AG04450 (cell line): ENCODE measurements at regions of chr3 and their contacts with region 1.

Region 1: GRCh38 chr3:195271116-195271858 is at the start of gene XXYLT1:
- DNase-seq: no peak
- H3K4me3 ChIP-seq: peak within 1 kb of the TSS; percentile 81
- H3K27ac ChIP-seq: peak within 1 kb of the TSS; percentile 39
- H3K27me3 ChIP-seq: no peaks in the 10 kb centered on the region
- CTCF ChIP-seq: peak; percentile 86
- polyA plus RNA-seq, gene XXYLT1: 16.5 and 17.3 TPM in 2 replicates

Region 2: GRCh38 chr3:195286115-195286872 is 15.0 kb after region 1 on chr3:
- CTCF ChIA-PET with region 1: interaction called, 48 read pairs
- POLR2A ChIA-PET with region 1: interaction called, 4 read pairs
- DNase-seq: peak; percentile 62
- H3K4me3 ChIP-seq: no peak overlapping the region
- H3K27ac ChIP-seq: no peak overlapping the region
- H3K27me3 ChIP-seq: no peaks in the 10 kb centered on the region
- CTCF ChIP-seq: no peak

Region 3: DNA sequence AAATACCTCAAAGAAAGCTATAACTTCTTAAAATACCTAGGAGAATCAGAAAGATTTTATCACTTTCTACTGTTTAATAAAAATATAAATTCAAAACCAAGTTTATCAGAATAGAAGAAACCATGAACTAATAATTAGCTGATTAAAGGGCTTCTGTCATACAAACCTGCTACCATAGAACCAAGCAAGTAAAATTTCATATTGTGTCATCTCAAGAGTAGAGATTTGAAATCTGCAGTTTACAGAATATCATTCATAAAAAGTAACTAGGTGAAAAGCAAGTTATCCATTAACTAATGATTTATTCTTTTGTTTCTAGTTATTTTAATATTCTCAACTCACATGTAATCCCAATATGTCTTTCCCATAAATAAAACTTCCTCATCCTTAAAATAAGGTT is 36.4 kb after region 1 on chr3:
- CTCF ChIA-PET with region 1: interaction called, 18 read pairs
- POLR2A ChIA-PET with region 1: no interaction called
- DNase-seq: no peak
- H3K4me3 ChIP-seq: no peak overlapping the region
- H3K27ac ChIP-seq: no peak overlapping the region
- H3K27me3 ChIP-seq: no peaks in the 10 kb centered on the region
- CTCF ChIP-seq: no peak

Region 4: DNA sequence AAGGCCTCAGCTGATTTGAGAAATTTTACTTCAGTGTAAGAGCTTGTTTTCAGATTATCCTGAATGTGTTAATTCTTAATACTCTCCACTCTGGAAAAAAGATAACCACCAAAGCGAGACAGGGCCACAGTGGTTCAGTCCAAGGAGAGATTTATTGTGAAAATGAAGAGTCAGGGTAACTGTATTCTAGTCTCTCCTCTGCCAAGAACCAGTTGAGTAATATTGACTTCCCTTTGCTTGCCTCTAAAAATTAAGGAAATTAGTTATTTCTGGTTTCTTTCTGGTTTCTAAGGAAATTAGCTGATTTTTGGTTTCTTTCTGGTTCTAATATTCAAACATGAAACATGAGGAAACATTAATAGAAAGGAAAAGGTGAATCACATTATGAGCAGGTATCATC is 236.9 kb after region 1 on chr3:
- CTCF ChIA-PET with region 1: interaction called, 35 read pairs
- POLR2A ChIA-PET with region 1: no interaction called
- DNase-seq: no peak
- H3K4me3 ChIP-seq: no peak overlapping the region
- H3K27ac ChIP-seq: no peak overlapping the region
- H3K27me3 ChIP-seq: no peaks in the 10 kb centered on the region
- CTCF ChIP-seq: no peak

Region 5: GRCh38 chr3:195522254-195523023 is 251.2 kb after region 1 on chr3:
- CTCF ChIA-PET with region 1: interaction called, 303 read pairs
- POLR2A ChIA-PET with region 1: interaction called, 3 read pairs
- DNase-seq: no peak
- H3K4me3 ChIP-seq: no peak overlapping the region
- H3K27ac ChIP-seq: no peak overlapping the region
- H3K27me3 ChIP-seq: no peaks in the 10 kb centered on the region
- CTCF ChIP-seq: peak; percentile 52